Gastrocnemius medialis (tissue), 4 donors: ENCODE measurements at regions of chr3 and their contacts with region 1.

Region 1: DNA sequence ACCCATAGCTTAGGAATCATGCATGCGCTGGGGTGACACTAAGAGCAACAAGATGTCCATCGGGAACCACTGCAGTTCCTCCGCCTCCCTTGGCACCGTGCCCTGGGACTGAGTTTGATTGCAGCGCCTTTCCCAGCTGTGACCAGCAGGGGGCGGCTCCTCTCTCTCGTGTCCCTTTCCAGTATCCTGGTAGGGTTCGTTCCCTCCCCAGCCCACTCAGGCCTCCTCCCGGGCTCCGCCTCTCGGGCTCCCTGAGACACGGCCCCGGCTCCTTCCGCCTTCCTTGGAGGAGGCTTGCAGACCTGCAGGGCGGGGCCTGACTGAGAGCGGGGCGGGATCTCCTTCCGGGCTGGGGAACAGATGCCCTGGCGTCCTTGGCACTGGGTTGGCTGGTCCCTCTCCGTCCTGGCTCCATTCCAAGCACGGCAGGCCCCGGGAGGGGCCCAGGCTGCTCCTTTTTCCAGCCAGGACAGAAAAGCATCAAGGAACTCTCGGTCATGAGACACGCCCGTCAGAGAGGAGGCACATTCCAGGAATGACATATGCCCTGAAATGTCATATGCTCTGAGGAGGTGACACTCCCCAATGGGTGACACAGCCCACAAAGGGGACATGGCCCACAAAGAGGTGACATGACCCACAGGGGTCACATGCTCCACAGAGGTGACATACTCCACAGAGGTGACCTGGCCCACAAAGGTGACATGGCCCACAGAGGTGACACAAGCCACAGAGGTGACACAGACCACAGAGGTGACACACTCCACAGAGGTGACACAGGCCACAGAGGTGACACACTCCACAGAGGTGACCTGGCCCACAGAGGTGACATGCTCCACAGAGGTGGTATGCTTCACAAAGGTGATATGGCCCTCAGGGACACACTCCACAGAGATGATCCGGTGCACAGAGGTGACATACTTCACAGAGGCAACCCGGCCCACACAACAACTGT is 79.0 kb downstream of the ABHD5 start:
- DNase-seq: peak; percentile 89 to 94
- ATAC-seq: peak; percentile 47 to 65
- H3K4me3 ChIP-seq: peak overlapping the region; percentile 15 to 49 (median 45)
- H3K27ac ChIP-seq: peak overlapping the region; percentile 72 to 88 (median 78)
- H3K4me1 ChIP-seq: peaks cover 32 to 70% of the 10 kb centered on the region in 2 donors
- H3K27me3 ChIP-seq: no peaks in the 10 kb centered on the region
- CTCF ChIP-seq: peak; percentile 79 to 90 (median 89)
- POLR2A ChIP-seq: no peak

Region 2: GRCh38 chr3:43001094-43001553 is 768.6 kb before region 1 on chr3:
- in situ Hi-C with region 1: no loop called
- intact Hi-C with region 1: loop called (anchors 5 kb)
- DNase-seq: peak; percentile 89 to 94
- ATAC-seq: peak; percentile 92 to 93
- H3K4me3 ChIP-seq: peak overlapping the region in 3 of 4 donors; percentile 16 to 41 (median 27)
- H3K27ac ChIP-seq: peak overlapping the region; percentile 73 to 81 (median 80)
- H3K4me1 ChIP-seq: peaks cover 41 to 47% of the 10 kb centered on the region in 2 donors
- H3K27me3 ChIP-seq: no peaks in the 10 kb centered on the region
- CTCF ChIP-seq: no peak
- POLR2A ChIP-seq: no peak

Region 3: DNA sequence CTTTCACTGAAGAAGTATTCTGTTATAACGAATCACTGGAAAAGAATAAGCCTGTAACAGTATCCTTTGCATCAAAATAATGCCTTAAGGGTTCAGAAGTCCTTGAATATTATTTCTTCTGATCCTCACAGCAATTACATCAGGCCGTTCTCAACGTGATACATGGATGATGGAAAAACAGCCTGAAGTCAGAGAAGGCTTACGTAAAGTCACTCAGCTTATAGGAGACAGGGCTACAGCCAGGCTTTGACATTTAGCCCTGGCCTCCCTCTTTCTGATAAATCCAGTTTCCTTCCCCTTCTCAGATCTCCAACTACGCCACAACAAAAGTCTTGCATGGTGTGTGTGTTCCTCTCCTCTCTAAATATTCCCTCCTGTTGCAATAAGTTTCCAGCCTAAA is 279.8 kb before region 1 on chr3:
- in situ Hi-C with region 1: no loop called
- intact Hi-C with region 1: no loop called
- DNase-seq: no peak
- ATAC-seq: no peak
- H3K4me3 ChIP-seq: no peak overlapping the region
- H3K27ac ChIP-seq: no peak overlapping the region
- H3K4me1 ChIP-seq: no peaks in the 10 kb centered on the region
- H3K27me3 ChIP-seq: no peaks in the 10 kb centered on the region
- CTCF ChIP-seq: no peak
- POLR2A ChIP-seq: no peak

Region 4: DNA sequence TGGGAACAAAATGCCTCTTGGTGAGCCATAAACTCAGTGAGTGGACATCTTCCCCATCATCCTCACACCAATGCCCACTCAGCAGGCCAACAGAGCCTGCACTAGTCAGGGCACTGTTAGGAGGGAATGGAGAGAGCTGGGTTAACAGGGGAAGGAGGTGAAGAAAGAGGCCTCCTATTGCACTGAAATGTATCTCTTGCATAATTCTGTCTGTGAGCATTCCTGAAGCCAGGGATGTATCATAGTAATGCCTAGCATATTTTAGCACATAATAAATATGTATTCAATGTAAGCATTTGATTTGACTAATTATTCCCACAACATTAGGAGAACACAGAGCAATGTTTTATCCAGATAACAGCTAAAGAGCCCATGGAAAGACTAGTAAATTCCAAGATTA is 229.1 kb before region 1 on chr3:
- in situ Hi-C with region 1: no loop called
- intact Hi-C with region 1: loop called (anchors 10 kb)
- DNase-seq: no peak
- ATAC-seq: no peak
- H3K4me3 ChIP-seq: no peak overlapping the region
- H3K27ac ChIP-seq: no peak overlapping the region
- H3K4me1 ChIP-seq: no peaks in the 10 kb centered on the region
- H3K27me3 ChIP-seq: no peaks in the 10 kb centered on the region
- CTCF ChIP-seq: no peak
- POLR2A ChIP-seq: no peak

Region 5: DNA sequence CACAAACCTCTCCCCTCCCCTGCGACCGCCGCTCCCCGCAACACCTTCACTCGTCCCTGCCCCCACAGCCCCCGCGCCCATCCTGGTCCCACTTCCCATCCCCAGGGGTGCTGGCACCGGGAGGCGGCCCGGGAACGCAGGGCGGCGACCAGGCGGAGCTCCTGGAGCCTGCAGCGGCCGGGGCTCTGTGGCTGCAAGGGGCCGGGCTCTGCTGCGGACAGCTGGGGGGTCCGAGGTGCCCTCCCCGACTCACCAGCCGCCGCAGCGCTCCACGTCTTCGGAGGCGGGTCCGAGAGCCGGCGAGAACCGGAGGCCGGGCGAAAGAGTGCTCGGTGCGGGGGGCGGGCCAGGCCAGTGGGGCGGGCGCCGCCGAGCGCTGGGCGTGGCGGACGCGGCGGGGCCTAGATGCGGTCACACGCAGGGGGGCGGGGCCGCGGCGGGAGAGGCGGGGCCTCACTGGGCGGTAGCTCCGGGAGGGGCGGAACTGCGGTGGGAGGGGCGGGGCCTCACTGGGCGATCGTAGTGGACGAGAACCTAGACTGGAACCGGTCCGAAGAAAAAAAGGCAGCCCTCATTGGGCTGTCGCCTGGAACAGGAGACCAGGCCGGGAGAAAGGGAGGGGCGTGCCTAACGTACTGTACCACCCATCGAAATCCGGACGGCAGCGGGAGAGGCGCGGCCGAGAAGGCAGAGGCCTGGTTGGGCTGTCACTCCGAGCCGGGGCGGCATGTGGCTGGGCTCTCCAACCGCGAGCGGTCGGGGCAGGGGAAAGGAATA is 147.9 kb before region 1 on chr3 and contains the start of gene ANO10:
- in situ Hi-C with region 1: no loop called
- intact Hi-C with region 1: loop called (anchors 1 kb)
- DNase-seq: peak; percentile 98 to 99
- ATAC-seq: peak; percentile 98
- H3K4me3 ChIP-seq: peak within 1 kb of the TSS; percentile 78 to 96 (median 90)
- H3K27ac ChIP-seq: peak within 1 kb of the TSS; percentile 82 to 90 (median 82)
- H3K4me1 ChIP-seq: peaks cover 14% of the 10 kb centered on the region in 2 donors
- H3K27me3 ChIP-seq: no peaks in the 10 kb centered on the region
- CTCF ChIP-seq: no peak
- POLR2A ChIP-seq: peak; percentile 62 to 83
- total RNA-seq, gene ANO10: 6.9 to 8.1 (median 7.8) TPM

Region 6: GRCh38 chr3:43690400-43691119 is 79.2 kb before region 1 on chr3 and contains the start of gene ABHD5:
- in situ Hi-C with region 1: no loop called
- intact Hi-C with region 1: loop called (anchors 2 kb)
- DNase-seq: peak; percentile 68 to 85
- ATAC-seq: peak; percentile 91
- H3K4me3 ChIP-seq: peak within 1 kb of the TSS; percentile 66 to 93 (median 76)
- H3K27ac ChIP-seq: peak within 1 kb of the TSS; percentile 82 to 95 (median 90)
- H3K4me1 ChIP-seq: peaks cover 23 to 28% of the 10 kb centered on the region in 2 donors
- H3K27me3 ChIP-seq: no peaks in the 10 kb centered on the region
- CTCF ChIP-seq: peak in 4 of 5 experiments; percentile 5 to 29 (median 19)
- POLR2A ChIP-seq: peak; percentile 98
- total RNA-seq, gene ABHD5: 18.6 to 43.7 (median 33.7) TPM

Region 7: DNA sequence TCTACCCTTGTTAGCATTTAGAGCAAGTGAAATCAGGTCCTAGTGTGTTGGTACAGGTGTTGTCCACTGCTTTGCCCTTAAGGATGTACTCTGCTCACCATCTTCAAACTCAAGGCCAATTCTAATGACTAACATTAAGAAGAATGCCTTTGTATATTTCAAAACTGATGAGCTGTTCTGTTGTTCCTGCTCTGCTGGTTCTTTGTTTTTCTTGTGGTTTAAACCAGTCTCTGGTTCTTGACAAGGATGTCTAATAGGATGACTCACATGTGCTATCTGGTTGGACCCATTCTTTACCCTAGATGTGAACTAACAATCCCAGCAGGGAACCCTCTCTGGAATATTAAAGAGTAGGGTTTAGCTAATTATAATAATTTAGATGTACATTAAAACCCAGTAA is 61.8 kb before region 1 on chr3:
- in situ Hi-C with region 1: no loop called
- intact Hi-C with region 1: loop called (anchors 5 kb)
- DNase-seq: no peak
- ATAC-seq: peak in 1 of 2 donors; percentile 37
- H3K4me3 ChIP-seq: no peak overlapping the region
- H3K27ac ChIP-seq: peak overlapping the region in 2 of 4 donors; percentile 3 to 38
- H3K4me1 ChIP-seq: peaks cover 0 to 4% of the 10 kb centered on the region in 2 donors
- H3K27me3 ChIP-seq: no peaks in the 10 kb centered on the region
- CTCF ChIP-seq: no peak
- POLR2A ChIP-seq: no peak

Region 8: DNA sequence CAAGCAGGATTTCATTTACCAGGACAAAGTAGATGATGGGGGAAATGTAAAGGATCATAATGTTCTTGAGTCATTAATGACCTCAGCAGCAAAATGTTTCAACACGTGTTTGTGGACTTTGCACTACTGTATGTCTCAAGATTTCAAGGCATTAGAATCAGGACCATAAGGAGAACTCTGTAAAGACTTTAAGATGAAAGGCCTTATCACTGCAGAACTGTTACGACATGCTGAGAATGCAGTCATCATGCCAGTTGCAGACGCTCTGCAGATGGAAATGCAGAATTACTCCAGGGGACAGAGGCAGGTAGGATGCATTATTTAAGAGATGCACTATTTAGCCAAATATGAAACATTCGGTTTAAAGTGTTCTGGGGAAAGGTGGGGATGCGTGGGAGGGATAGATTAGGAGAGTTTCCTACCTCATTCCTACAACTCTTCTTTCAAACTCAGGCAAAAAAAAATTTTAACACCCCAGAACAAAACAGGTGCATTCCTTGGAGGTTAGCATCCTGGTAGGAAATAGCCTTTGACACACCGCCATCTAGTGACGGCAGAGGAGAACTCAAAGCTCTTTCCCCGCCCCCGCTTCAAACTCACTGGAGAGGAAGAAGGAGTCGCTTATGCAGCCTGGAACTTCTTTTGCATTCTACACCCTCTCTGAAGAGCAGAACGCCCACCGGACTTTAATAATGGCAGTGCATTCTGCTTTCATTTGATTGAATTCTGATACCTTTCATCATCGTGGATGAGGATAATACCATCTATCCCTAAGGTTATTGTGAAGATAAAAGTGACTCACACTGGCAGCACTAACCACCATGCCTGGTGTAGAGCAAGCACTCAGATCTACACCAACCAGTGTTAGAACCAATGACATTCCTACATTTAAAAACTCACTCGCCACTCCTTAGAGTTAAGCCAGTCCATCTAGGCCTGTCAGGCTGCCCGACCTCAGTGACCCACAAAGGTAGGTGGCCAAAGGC is 428.8 kb after region 1 on chr3:
- in situ Hi-C with region 1: no loop called
- intact Hi-C with region 1: loop called (anchors 5 kb)
- DNase-seq: peak; percentile 36 to 39
- ATAC-seq: peak; percentile 80 to 82
- H3K4me3 ChIP-seq: no peak overlapping the region
- H3K27ac ChIP-seq: no peak overlapping the region
- H3K4me1 ChIP-seq: no peaks in the 10 kb centered on the region
- H3K27me3 ChIP-seq: no peaks in the 10 kb centered on the region
- CTCF ChIP-seq: peak; percentile 43 to 82 (median 71)
- POLR2A ChIP-seq: no peak